ENCODE measurements at regions of chr5 and their contacts with region 1.

Region 1: GRCh38 chr5:122458278-122458872 is 146.3 kb downstream of the SNCAIP start:
- DNase-seq: peak; percentile 66
- H3K4me3 Mint-ChIP-seq: no peak overlapping the region
- H3K27ac Mint-ChIP-seq: no peak overlapping the region
- H3K4me1 Mint-ChIP-seq: peaks cover 11% of the 10 kb centered on the region
- H3K27me3 Mint-ChIP-seq: no peaks in the 10 kb centered on the region
- CTCF ChIP-seq: peak; percentile 63

Region 2: DNA sequence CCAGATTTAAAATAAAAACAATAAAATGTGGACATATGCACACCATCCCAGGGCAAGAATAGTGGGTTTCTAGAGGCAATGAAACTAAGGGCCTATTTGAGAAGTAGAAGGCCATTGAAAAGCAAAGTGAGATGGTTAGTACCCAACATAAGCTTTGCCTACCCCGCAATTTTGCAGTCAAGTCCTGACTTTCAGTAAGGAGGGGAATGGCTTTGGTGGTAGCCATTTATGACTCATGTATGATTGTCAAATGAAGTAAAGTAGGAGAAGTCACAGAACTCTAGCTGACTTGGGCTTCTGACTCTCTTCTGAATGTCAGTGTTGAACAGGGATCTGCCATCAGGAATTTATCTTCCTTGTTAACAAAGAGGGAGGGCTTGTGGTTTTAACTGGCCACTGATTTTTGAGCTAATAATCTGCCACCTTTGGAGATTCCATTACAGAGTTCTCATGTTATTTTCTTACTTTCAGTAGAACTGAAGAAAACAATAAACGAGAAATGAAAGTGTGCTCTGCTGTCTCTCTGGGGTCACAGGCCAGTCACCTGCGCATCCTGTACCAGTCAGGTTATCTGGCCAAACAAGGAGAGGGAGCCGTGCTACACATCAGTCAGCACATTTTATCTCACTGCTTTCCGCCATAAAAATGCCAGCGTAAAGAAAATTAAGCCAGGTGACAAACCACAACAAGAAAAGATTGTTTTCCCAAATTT is 160.6 kb before region 1 on chr5:
- CTCF ChIA-PET with region 1: no interaction called
- POLR2A ChIA-PET with region 1: no interaction called
- intact Hi-C with region 1: no loop called
- DNase-seq: no peak
- H3K4me3 Mint-ChIP-seq: no peak overlapping the region
- H3K27ac Mint-ChIP-seq: no peak overlapping the region
- H3K4me1 Mint-ChIP-seq: no peaks in the 10 kb centered on the region
- H3K27me3 Mint-ChIP-seq: no peaks in the 10 kb centered on the region
- CTCF ChIP-seq: no peak

Region 3: DNA sequence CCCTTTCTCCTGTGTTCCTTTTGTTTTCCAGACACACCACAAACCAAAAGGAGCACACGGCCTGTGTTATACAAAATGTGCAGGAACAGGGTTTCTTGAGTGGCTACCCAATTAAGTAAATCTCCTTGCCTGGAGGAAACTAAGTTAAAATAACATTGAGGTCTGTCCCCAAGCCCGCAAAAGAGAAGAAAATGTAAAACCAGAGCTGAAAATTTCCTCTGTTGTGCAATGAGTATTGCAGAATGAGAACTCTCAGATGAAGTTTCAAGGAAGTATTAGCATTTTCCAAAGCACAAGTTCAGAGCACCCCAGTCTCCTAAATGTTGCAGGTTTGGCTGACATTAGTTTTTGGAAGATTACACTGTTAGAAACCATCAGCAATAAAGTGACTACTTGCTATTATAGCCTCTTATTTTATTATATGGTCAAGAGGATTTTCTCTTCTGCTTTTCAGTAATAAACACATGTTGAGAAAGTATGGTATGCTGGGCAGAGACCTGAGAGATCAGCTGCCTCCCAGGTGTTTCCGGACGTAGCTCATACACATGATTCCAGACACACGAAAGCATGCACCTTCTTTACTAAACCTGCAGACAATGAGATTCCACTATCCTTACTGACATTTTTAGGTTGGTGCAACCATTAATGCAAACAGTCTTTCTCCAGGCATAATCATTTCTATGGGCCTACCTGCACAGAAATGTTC is 14.9 kb after region 1 on chr5:
- CTCF ChIA-PET with region 1: interaction called, 10 read pairs
- POLR2A ChIA-PET with region 1: interaction called, 12 read pairs
- intact Hi-C with region 1: no loop called
- DNase-seq: peak; percentile 65
- H3K4me3 Mint-ChIP-seq: no peak overlapping the region
- H3K27ac Mint-ChIP-seq: peak overlapping the region; percentile 37
- H3K4me1 Mint-ChIP-seq: peaks cover 41% of the 10 kb centered on the region
- H3K27me3 Mint-ChIP-seq: no peaks in the 10 kb centered on the region
- CTCF ChIP-seq: no peak

Region 4: DNA sequence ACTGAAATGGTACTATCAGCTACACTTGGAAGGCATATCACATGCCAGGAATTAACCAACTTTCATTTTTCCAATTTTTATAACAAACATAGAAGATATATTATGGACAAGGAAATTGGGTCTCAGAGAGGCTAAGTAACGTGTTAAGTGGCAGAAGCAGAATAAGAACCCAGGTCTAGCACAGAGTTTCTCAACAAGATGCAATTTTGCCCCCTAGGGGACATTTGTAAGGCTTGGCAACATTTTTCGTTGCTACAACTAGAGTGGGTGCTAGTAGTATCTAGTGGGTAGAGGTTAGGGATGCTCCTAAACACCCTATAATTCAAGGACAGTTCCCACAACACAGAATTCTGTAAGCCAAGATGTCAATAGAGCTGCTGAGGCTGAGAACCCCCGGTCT is 34.3 kb after region 1 on chr5:
- CTCF ChIA-PET with region 1: interaction called, 9 read pairs
- POLR2A ChIA-PET with region 1: interaction called, 4 read pairs
- intact Hi-C with region 1: loop called (anchors 1 kb)
- DNase-seq: peak; percentile 73
- H3K4me3 Mint-ChIP-seq: no peak overlapping the region
- H3K27ac Mint-ChIP-seq: no peak overlapping the region
- H3K4me1 Mint-ChIP-seq: peaks cover 9% of the 10 kb centered on the region
- H3K27me3 Mint-ChIP-seq: no peaks in the 10 kb centered on the region
- CTCF ChIP-seq: peak; percentile 28

Measured in MCF 10A (cell line).